ENCODE measurements at regions of chr14 and their contacts with region 1.

Region 1: GRCh38 chr14:21643407-21643806 is 8.7 kb upstream of the OR10G2 start:
- DNase-seq: no peak
- ATAC-seq: no peak

Region 2: GRCh38 chr14:21326972-21327371 is 316.4 kb before region 1 on chr14:
- intact Hi-C with region 1: no loop called
- DNase-seq: no peak
- ATAC-seq: no peak

Region 3: DNA sequence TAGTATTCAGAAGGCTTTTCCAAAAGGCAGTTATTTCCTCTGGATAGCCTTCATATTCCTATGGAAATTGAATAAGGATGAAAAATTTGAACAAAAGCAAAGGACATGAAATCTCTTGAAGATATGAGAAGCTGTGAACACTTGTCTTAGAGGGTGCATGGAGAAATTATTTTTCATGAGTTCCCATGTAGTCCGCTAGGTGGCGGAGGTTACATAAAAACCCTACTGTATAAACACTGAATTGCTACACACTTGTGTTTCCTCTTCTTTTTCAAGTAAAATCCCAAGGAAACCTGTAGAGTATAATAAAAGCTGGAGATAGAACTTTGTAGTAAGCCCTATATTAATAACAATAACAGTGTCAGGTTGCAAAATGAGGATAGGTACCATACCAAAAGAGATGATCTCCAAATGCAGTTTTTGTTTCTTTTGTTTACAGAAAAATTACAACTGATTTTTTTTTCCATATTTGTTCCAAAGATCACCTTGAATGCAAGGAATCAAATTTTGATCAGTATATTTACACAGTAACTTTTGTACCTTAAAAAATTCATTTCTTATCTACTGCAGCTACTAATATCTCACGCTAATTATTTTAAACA is 68.1 kb after region 1 on chr14:
- intact Hi-C with region 1: loop called (anchors 2 kb)
- DNase-seq: no peak
- ATAC-seq: no peak

Region 4: DNA sequence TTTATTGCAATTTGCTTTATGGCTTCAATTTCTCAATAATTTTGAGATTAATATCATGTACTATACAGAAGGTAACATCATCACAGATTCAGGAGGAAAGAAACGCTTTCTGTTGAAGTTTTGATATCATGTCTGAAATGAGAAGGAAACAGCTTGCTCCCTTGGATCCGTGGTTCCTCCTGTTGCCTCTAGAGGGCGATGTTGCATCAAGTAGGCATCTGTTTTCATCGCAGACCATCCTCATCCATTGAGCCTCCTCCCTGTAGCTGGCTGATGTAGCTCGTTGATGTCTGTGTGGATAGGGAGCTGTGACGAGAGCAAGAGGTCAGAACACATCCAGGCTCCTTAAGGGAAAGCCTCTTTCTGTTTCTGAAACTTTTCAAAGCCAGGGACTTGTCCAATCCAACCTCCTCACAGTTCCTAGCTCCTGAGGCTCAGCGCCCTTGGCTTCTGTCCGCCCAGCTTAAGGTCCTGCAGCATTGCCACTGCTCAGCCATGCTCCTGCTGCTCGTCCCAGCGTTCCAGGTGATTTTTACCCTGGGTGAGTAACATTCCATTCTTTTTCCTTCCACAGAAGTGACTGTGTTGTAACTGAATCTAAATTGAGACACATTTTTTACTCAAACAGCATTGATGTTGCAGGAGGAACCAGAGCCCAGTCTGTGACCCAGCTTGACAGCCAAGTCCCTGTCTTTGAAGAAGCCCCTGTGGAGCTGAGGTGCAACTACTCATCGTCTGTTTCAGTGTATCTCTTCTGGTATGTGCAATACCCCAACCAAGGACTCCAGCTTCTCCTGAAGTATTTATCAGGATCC is 335.0 kb after region 1 on chr14:
- intact Hi-C with region 1: no loop called
- DNase-seq: no peak
- ATAC-seq: no peak

Measured in Right ventricle myocardium inferior (tissue), 1 donor.